Body of pancreas (tissue), 4 donors: ENCODE measurements at regions of chr22 and their contacts with region 1.

Region 1: GRCh38 chr22:29028468-29028867 is 33.2 kb downstream of the C22orf31 start:
- DNase-seq: no peak
- ATAC-seq: no peak
- H3K4me3 ChIP-seq: no peak overlapping the region
- H3K27ac ChIP-seq: no peak overlapping the region
- H3K4me1 ChIP-seq: peaks cover 57% of the 10 kb centered on the region
- H3K27me3 ChIP-seq: no peaks in the 10 kb centered on the region
- CTCF ChIP-seq: no peak
- POLR2A ChIP-seq: no peak

Region 2: GRCh38 chr22:28768701-28769393 is 259.6 kb before region 1 on chr22:
- intact Hi-C with region 1: no loop called
- DNase-seq: no peak
- ATAC-seq: no peak
- H3K4me3 ChIP-seq: no peak overlapping the region
- H3K27ac ChIP-seq: no peak overlapping the region
- H3K4me1 ChIP-seq: peaks cover 10% of the 10 kb centered on the region
- H3K27me3 ChIP-seq: no peaks in the 10 kb centered on the region
- CTCF ChIP-seq: no peak
- POLR2A ChIP-seq: no peak

Region 3: DNA sequence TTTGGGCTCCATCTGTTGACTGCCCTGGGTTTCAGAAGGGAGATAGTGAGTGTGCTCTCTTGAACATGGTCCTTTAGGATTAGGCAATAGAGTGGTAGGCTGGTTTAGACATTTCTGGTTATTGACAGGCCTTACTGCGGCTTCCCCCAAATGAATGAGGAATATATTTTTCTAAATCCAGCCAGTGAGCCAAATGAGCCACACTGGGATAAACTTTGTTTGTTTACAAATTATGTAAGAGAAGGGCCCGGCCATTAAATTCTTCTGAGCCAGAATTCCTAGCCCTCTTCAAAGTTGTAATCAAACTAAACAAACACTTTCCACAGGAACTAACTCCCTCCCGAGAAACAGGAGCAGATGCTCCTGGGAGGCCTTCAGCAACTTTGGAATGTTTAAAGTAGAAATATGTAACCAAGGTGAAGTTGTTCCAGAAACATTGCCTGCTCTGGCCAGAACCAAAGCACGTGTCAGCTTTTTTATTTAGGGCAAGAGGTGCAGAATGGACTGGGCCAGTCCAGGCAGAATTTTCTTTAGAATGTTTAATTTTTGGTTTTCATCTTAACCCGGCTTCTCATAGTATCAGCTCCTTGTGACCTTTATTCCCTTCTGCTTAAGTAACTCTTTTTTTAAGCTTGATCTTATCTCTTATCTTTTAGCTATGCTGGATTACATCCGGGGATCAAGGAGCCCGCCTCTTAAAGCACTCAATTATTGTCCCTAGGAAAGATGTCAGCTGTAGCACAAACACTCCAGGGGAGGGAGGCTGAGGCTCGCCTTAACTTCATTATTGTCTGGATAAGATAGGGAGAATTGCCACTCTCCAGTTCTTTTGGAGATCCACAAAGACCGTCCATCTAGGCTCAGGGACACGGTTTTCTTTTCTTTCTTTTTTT is 116.4 kb before region 1 on chr22:
- intact Hi-C with region 1: loop called (anchors 5 kb)
- DNase-seq: peak in 1 of 4 donors; percentile 24
- ATAC-seq: peak; percentile 72
- H3K4me3 ChIP-seq: no peak overlapping the region
- H3K27ac ChIP-seq: peak overlapping the region; percentile 22 to 74 (median 56)
- H3K4me1 ChIP-seq: peaks cover 45% of the 10 kb centered on the region
- H3K27me3 ChIP-seq: no peaks in the 10 kb centered on the region
- CTCF ChIP-seq: no peak
- POLR2A ChIP-seq: no peak

Region 4: GRCh38 chr22:28923826-28924732 is 104.4 kb before region 1 on chr22:
- intact Hi-C with region 1: no loop called
- DNase-seq: peak; percentile 76 to 85 (median 84)
- ATAC-seq: peak; percentile 86
- H3K4me3 ChIP-seq: no peak overlapping the region
- H3K27ac ChIP-seq: peak overlapping the region in 3 of 4 donors; percentile 58 to 72 (median 69)
- H3K4me1 ChIP-seq: peaks cover 81% of the 10 kb centered on the region
- H3K27me3 ChIP-seq: no peaks in the 10 kb centered on the region
- CTCF ChIP-seq: no peak
- POLR2A ChIP-seq: no peak

Region 5: GRCh38 chr22:29457730-29458129 is 429.3 kb after region 1 on chr22:
- intact Hi-C with region 1: no loop called
- DNase-seq: peak in 2 of 4 donors; percentile 16 to 27
- ATAC-seq: peak; percentile 58
- H3K4me3 ChIP-seq: no peak overlapping the region
- H3K27ac ChIP-seq: no peak overlapping the region
- H3K4me1 ChIP-seq: no peaks in the 10 kb centered on the region
- H3K27me3 ChIP-seq: no peaks in the 10 kb centered on the region
- CTCF ChIP-seq: no peak
- POLR2A ChIP-seq: no peak

Region 6: GRCh38 chr22:30079952-30080533 is 1051.6 kb after region 1 on chr22 and contains the start of gene HORMAD2:
- intact Hi-C with region 1: no loop called
- DNase-seq: no peak
- ATAC-seq: no peak
- H3K4me3 ChIP-seq: no peak within 1 kb of the TSS
- H3K27ac ChIP-seq: no peak within 1 kb of the TSS
- H3K4me1 ChIP-seq: no peaks in the 10 kb centered on the region
- H3K27me3 ChIP-seq: no peaks in the 10 kb centered on the region
- CTCF ChIP-seq: no peak
- POLR2A ChIP-seq: no peak
- total RNA-seq, gene HORMAD2: not detected